ENCODE measurements at regions of chr12 and their contacts with region 1.

Region 1: DNA sequence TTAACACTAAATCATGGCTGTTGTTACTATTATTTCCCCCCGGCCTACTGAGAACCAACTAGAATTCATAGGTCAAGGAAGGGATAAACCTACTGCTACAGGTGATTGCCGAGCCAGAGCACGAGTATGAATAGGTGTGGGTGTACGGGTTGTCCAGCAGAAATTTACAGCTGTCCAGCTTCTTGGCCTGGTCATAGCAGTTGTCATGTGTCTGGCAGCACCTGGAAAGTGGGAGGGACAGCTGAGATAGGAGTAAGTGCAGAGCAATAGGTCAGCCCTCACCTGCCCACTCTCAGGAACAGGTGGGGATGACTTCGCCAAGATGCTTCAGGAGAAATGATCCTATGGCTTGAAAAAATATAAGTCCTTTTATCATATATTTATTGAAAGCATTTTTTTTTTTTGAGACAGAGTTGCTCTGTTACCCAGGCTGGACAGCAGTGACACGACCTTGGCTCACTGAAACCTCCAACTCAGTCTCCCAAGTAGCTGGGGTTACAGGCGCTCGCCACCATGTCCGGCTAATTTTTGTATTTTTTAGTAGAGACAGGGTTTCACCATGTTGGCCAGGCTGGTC is 2.6 kb downstream of the PLA2G1B start:
- DNase-seq: no peak
- H3K4me3 ChIP-seq: peak overlapping the region in 1 of 4 donors; percentile 66
- H3K27ac ChIP-seq: no peak overlapping the region
- H3K4me1 ChIP-seq: peaks cover 0 to 9% (median 6%) of the 10 kb centered on the region in 4 donors
- H3K27me3 ChIP-seq: no peaks in the 10 kb centered on the region
- CTCF ChIP-seq: no peak
- EP300 ChIP-seq: no peak
- POLR2A ChIP-seq: no peak

Region 2: DNA sequence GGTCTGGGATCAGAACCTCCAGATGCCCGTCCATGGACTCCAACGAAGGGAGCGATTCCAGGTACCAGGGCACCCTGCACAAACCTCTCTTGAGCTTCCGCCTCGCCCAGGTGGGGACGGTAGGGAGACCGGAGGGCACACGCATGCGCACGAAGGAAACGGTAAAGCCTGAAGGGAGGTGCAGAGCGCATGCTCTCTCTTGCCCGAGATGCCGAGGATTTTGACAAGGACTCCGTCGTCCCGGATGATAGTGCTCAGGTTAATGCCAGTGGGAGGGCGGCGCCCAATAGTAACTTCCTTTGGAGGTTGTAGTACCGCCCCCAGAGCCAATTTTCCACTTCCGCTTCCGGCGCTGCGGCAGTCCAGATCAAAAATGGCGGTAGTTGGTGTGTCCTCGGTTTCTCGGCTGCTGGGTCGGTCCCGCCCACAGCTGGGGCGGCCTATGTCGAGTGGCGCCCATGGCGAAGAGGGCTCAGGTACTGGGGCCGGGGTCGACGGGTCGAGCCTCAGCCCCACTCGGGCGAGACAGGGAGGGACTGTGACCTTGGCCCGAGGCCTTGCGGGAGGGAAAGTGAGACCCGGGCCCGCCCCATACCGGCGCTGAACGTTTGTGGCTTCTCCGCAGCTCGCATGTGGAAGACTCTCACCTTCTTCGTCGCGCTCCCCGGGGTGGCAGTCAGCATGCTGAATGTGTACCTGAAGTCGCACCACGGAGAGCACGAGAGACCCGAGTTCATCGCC is 113.0 kb after region 1 on chr12 and contains the start of gene COX6A1:
- intact Hi-C with region 1: loop called (anchors 1 kb)
- DNase-seq: peak; percentile 98
- H3K4me3 ChIP-seq: peak within 1 kb of the TSS; percentile 64 to 90 (median 74)
- H3K27ac ChIP-seq: peak within 1 kb of the TSS; percentile 80 to 87 (median 83)
- H3K4me1 ChIP-seq: peaks cover 16 to 25% (median 22%) of the 10 kb centered on the region in 4 donors
- H3K27me3 ChIP-seq: peaks cover 0 to 19% (median 0%) of the 10 kb centered on the region in 4 donors
- CTCF ChIP-seq: peak; percentile 3 to 26 (median 13)
- EP300 ChIP-seq: no peak
- POLR2A ChIP-seq: no peak
- total RNA-seq, gene COX6A1: 499 to 689 (median 548) TPM

Region 3: GRCh38 chr12:120539303-120539702 is 214.4 kb after region 1 on chr12:
- intact Hi-C with region 1: no loop called
- DNase-seq: no peak
- H3K4me3 ChIP-seq: peak overlapping the region; percentile 10 to 97 (median 82)
- H3K27ac ChIP-seq: peak overlapping the region; percentile 96 to 98 (median 96)
- H3K4me1 ChIP-seq: peaks cover 87 to 92% (median 90%) of the 10 kb centered on the region in 4 donors
- H3K27me3 ChIP-seq: no peaks in the 10 kb centered on the region
- CTCF ChIP-seq: no peak
- EP300 ChIP-seq: no peak
- POLR2A ChIP-seq: no peak

Measured in esophagus muscularis mucosa (tissue), 4 donors.